Activated naive CD4-positive, alpha-beta T cell treated with anti-CD3 and anti-CD28 coated beads, Interleukin-2, amount 10 ng/mL, durations not matched to agents 7 days and 5 days (primary cell): ENCODE measurements at regions of chr7 and their contacts with region 1.

Region 1: GRCh38 chr7:148856891-148857290 is 27.2 kb downstream of the EZH2 start:
- DNase-seq: no peak
- H3K4me3 Mint-ChIP-seq: no peak overlapping the region
- H3K27ac Mint-ChIP-seq: no peak overlapping the region
- H3K4me1 Mint-ChIP-seq: peaks cover 33% of the 10 kb centered on the region
- H3K27me3 Mint-ChIP-seq: no peaks in the 10 kb centered on the region

Region 2: DNA sequence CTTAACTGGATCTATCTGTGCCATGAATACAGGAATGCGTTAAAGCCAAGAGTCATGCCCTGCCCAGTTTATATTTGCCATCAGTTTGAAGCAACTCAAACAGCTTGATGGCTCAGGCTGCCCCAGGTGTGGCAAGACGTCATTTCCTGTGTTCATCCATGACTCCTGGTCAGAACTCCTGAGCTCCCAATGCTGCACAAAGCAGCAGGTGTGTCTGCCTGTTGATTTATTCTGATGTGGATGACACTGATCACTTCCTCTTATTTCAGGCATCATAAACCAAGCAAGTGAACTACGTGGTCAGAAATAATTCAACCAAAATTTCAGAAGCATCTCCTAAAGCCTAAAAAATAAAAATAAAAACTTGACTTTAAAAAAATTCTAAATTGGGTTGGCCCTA is 41.3 kb before region 1 on chr7:
- CTCF ChIA-PET with region 1: no interaction called
- DNase-seq: no peak
- H3K4me3 Mint-ChIP-seq: no peak overlapping the region
- H3K27ac Mint-ChIP-seq: no peak overlapping the region
- H3K4me1 Mint-ChIP-seq: no peaks in the 10 kb centered on the region
- H3K27me3 Mint-ChIP-seq: no peaks in the 10 kb centered on the region

Region 3: GRCh38 chr7:148867596-148868377 is 10.9 kb after region 1 on chr7:
- CTCF ChIA-PET with region 1: interaction called, 13 read pairs
- DNase-seq: no peak
- H3K4me3 Mint-ChIP-seq: no peak overlapping the region
- H3K27ac Mint-ChIP-seq: peak overlapping the region; percentile 19
- H3K4me1 Mint-ChIP-seq: peaks cover 54% of the 10 kb centered on the region
- H3K27me3 Mint-ChIP-seq: no peaks in the 10 kb centered on the region

Region 4: GRCh38 chr7:148940702-148941597 is 84.1 kb after region 1 on chr7:
- CTCF ChIA-PET with region 1: interaction called, 22 read pairs
- DNase-seq: peak; percentile 82
- H3K4me3 Mint-ChIP-seq: peak overlapping the region; percentile 85
- H3K27ac Mint-ChIP-seq: peak overlapping the region; percentile 99
- H3K4me1 Mint-ChIP-seq: peaks cover 30% of the 10 kb centered on the region
- H3K27me3 Mint-ChIP-seq: no peaks in the 10 kb centered on the region

Region 5: DNA sequence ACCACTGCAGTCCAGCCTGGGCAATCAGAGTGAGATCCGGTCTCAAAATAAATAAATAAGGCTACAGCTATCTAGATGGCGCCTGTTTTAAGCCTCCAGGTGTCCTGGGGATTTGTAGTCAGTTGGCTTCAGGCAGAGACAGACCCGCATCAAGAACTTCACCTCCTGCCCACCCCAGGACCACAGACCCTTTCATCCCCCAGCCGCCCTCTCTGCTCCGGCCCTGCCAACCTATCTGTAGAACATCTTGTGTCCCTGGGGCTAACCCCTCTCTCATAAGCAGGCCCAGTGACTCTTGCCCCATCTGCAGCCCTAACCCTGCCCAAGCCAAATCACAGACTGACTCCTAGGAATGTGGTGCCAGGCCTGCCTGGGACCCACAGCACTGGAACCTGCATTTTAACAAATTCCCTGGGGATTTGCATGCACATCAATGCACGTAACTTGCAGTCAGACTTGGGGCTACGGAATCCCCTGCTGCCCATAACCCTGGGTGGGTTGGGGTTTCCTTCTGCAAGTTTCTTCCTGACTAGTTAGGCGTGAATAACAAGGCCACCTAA is 153.6 kb after region 1 on chr7:
- CTCF ChIA-PET with region 1: no interaction called
- DNase-seq: no peak
- H3K4me3 Mint-ChIP-seq: no peak overlapping the region
- H3K27ac Mint-ChIP-seq: no peak overlapping the region
- H3K4me1 Mint-ChIP-seq: peaks cover 2% of the 10 kb centered on the region
- H3K27me3 Mint-ChIP-seq: no peaks in the 10 kb centered on the region

Region 6: DNA sequence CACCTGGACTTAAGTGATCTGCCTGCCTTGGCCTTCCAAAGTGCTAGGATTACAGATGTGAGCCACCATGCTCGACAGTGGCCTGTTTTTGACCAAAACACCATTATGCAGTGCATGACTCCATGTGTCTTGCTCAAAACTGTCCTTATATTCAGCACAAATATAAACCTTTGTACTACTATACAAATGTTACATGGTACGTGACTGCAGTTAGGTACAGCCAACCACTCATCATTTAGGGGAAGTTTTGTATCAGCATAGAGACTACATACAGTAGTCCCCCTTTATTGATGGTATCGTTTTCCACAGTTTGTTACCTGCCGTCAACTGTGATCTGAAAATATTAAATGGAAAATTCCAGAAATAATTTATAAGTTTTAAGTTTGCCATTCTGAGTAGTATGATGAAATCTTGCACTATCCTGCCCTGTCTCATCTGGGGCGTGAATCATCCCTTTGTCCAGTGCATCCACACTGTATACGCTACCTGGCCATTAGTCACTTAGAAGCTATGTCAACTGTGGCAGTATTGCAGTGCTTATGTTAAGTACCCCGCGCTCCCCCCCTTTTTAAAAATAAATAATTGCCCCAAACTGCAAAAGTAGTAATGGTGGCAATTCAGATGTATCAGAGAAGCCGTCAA is 315.1 kb after region 1 on chr7:
- CTCF ChIA-PET with region 1: no interaction called
- DNase-seq: no peak
- H3K4me3 Mint-ChIP-seq: no peak overlapping the region
- H3K27ac Mint-ChIP-seq: no peak overlapping the region
- H3K4me1 Mint-ChIP-seq: no peaks in the 10 kb centered on the region
- H3K27me3 Mint-ChIP-seq: no peaks in the 10 kb centered on the region